Activated CD4-positive, alpha-beta memory T cell treated with anti-CD3 and anti-CD28 coated beads for 36 hours (primary cell): ENCODE measurements at regions of chr9 and their contacts with region 1.

Region 1: GRCh38 chr9:13110766-13111417 is 168.6 kb downstream of the MPDZ start:
- DNase-seq: no peak
- H3K4me3 Mint-ChIP-seq: no peak overlapping the region
- H3K27ac Mint-ChIP-seq: no peak overlapping the region
- H3K4me1 Mint-ChIP-seq: no peaks in the 10 kb centered on the region
- H3K27me3 Mint-ChIP-seq: no peaks in the 10 kb centered on the region

Region 2: DNA sequence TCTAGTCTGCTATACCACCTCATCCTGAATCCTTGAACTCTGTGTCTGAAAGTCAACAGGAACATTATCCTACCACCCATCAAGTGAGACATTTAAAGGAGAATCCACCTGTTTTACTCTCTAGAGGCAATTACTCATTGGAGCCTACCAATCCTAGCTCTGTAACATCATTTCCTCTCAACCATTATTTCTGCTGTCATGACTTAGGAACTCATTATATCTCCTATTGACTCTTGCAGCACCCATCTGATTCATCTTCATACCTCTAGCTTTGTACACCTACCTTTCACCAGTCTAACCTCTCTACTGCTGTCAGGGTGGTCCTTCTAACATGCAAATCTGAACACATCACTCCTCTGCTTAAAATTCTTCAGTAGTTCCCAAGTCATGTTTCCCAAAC is 721.6 kb after region 1 on chr9:
- CTCF ChIA-PET with region 1: no interaction called
- POLR2A ChIA-PET with region 1: no interaction called
- intact Hi-C with region 1: loop called (anchors 10 kb)
- DNase-seq: no peak
- H3K4me3 Mint-ChIP-seq: no peak overlapping the region
- H3K27ac Mint-ChIP-seq: no peak overlapping the region
- H3K4me1 Mint-ChIP-seq: no peaks in the 10 kb centered on the region
- H3K27me3 Mint-ChIP-seq: no peaks in the 10 kb centered on the region